Activated CD4-positive, alpha-beta T cell treated with anti-CD3 and anti-CD28 coated beads, Interleukin-2, amount 10 ng/mL, durations not matched to agents 7 days and 5 days (primary cell): ENCODE measurements at regions of chr1 and their contacts with region 1.

Region 1: DNA sequence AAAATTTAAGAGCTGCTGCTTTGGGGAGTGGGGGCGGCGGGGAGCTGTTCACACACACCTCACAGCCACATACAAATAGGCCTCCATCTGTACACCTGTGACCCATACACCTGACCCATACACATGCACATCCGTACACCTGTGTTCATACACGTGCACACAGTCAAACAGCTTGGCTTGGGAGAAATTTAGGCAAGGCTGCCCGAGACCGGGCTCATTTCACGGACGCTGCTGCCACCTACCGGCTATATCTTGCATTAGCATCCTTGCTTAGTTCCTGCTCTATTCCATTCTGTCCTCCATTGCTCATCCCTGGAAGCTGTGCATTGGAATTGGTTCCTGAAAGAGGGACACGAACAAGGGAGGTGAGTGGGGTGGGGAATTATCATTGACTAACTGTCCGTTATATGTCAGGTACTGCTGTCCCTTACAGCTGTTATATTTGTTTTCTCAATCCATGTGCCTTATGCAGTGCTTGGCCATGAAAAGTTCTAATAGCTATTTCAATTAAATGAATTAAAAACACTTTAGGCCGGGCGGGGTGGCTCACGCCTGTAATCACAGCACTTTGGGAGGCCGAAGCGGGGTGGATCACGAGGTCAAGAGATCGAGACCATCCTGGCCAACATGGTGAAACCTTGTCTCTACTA is 37.1 kb upstream of the EPB41 start:
- DNase-seq: peak; percentile 82
- H3K4me3 Mint-ChIP-seq: no peak overlapping the region
- H3K27ac Mint-ChIP-seq: no peak overlapping the region
- H3K4me1 Mint-ChIP-seq: peaks cover 12% of the 10 kb centered on the region
- H3K27me3 Mint-ChIP-seq: peaks cover 2% of the 10 kb centered on the region

Region 2: DNA sequence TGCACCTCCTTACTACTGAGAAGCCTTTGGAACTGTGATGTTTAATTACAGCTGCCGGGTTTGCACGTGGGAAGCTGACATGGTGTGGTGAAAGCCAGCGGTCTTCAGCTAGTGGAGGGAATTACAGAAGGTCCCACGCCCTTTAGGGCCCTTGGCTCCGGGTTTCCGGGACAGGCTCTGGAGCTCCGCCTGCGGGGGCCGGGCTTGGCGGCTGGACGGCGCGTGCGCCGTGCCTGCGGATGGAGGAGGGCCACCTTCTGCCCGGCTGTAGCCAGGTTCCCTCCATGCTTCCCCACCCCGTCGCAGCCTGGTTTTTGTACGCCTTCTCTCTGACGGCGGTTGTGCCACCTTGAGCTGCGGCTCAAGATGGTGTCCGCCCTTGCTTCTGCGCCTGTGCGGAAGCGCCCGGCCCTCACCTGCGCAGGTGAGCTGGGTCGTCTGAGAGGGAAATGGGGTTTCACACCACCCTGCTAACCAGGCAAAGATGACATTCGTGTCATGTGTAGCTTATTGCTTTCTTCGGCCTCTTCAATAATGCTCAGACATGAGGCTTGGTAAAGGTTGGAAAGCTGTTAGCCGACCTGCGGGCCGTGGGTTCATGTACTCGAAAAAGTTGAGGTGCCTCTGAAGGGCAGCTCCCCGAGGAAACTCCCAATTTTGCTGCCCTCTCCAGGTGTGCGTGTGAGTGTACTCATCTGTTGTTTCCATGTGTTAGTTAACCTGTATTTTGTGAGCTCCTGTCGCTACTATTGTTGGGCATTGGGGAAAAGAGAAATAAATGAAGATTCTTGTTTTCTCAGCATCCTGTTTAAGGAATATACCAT is 101.9 kb before region 1 on chr1:
- CTCF ChIA-PET with region 1: interaction called, 12 read pairs
- POLR2A ChIA-PET with region 1: no interaction called
- DNase-seq: peak; percentile 64
- H3K4me3 Mint-ChIP-seq: peak overlapping the region; percentile 76
- H3K27ac Mint-ChIP-seq: peak overlapping the region; percentile 78
- H3K4me1 Mint-ChIP-seq: peaks cover 8% of the 10 kb centered on the region
- H3K27me3 Mint-ChIP-seq: peaks cover 7% of the 10 kb centered on the region

Region 3: GRCh38 chr1:28783363-28783762 is 93.9 kb before region 1 on chr1:
- CTCF ChIA-PET with region 1: interaction called, 17 read pairs
- POLR2A ChIA-PET with region 1: no interaction called
- DNase-seq: no peak
- H3K4me3 Mint-ChIP-seq: no peak overlapping the region
- H3K27ac Mint-ChIP-seq: no peak overlapping the region
- H3K4me1 Mint-ChIP-seq: peaks cover 7% of the 10 kb centered on the region
- H3K27me3 Mint-ChIP-seq: peaks cover 12% of the 10 kb centered on the region

Region 4: GRCh38 chr1:28862571-28863403 is 14.5 kb before region 1 on chr1:
- CTCF ChIA-PET with region 1: interaction called, 13 read pairs
- POLR2A ChIA-PET with region 1: no interaction called
- DNase-seq: no peak
- H3K4me3 Mint-ChIP-seq: no peak overlapping the region
- H3K27ac Mint-ChIP-seq: no peak overlapping the region
- H3K4me1 Mint-ChIP-seq: no peaks in the 10 kb centered on the region
- H3K27me3 Mint-ChIP-seq: peaks cover 3% of the 10 kb centered on the region

Region 5: DNA sequence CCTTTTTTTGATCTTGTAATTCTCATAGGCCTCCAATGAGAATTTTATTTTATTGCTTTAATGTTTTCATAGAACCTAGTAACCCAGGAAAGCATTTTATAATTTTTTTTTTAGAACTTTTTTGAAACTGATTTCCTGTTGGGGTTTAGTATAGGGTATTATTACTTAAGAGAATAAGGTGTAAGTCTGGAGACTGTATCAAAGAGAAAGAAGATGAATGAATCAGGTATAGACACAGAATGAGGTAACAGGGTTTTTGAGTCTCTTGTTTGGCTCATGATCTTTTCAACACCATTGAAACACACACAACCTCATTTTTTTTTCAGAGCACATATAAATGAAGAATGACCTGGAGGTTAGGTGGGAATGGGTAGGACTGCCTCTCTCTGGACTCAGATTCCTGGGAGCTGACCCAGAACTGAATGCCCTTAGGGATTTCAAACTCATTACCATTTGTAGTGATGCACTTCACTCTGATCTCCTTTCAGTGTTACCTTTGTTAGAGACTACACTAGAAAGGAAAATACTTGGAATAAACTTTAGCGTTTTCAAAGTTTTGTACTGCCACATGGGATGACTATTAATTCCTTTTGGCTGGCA is 88.1 kb after region 1 on chr1:
- CTCF ChIA-PET with region 1: no interaction called
- POLR2A ChIA-PET with region 1: no interaction called
- DNase-seq: no peak
- H3K4me3 Mint-ChIP-seq: no peak overlapping the region
- H3K27ac Mint-ChIP-seq: no peak overlapping the region
- H3K4me1 Mint-ChIP-seq: peaks cover 43% of the 10 kb centered on the region
- H3K27me3 Mint-ChIP-seq: no peaks in the 10 kb centered on the region

Region 6: GRCh38 chr1:29033829-29034466 is 156.7 kb after region 1 on chr1:
- CTCF ChIA-PET with region 1: interaction called, 23 read pairs
- POLR2A ChIA-PET with region 1: no interaction called
- DNase-seq: peak; percentile 10
- H3K4me3 Mint-ChIP-seq: no peak overlapping the region
- H3K27ac Mint-ChIP-seq: no peak overlapping the region
- H3K4me1 Mint-ChIP-seq: no peaks in the 10 kb centered on the region
- H3K27me3 Mint-ChIP-seq: no peaks in the 10 kb centered on the region

Region 7: DNA sequence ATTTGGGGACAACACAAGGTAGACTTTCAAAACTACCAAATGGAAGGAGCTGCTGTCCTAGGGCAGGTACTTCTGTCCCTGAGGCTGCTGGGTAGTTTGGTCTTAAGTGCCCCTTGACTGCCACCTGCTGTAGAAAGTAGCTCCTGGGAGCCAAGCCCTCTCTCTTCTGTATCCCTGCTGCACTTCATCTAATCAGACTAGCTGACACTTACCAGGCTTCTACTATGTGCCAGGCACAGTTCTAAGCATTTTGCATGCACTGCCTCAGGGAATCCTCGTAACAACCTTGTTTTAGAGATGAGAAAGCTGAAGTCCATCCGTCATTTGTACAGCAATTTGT is 320.3 kb after region 1 on chr1:
- CTCF ChIA-PET with region 1: interaction called, 22 read pairs
- POLR2A ChIA-PET with region 1: no interaction called
- DNase-seq: peak; percentile 64
- H3K4me3 Mint-ChIP-seq: no peak overlapping the region
- H3K27ac Mint-ChIP-seq: no peak overlapping the region
- H3K4me1 Mint-ChIP-seq: peaks cover 12% of the 10 kb centered on the region
- H3K27me3 Mint-ChIP-seq: no peaks in the 10 kb centered on the region